ENCODE measurements at regions of chr11 and their contacts with region 1.

Region 1: GRCh38 chr11:97963528-97964331 is 1057.0 kb upstream of the CNTN5 start:
- DNase-seq: no peak
- H3K4me3 ChIP-seq: no peak overlapping the region
- H3K27ac ChIP-seq: no peak overlapping the region
- H3K4me1 ChIP-seq: peaks cover 31% of the 10 kb centered on the region
- H3K27me3 ChIP-seq: no peaks in the 10 kb centered on the region
- CTCF ChIP-seq: no peak

Region 2: DNA sequence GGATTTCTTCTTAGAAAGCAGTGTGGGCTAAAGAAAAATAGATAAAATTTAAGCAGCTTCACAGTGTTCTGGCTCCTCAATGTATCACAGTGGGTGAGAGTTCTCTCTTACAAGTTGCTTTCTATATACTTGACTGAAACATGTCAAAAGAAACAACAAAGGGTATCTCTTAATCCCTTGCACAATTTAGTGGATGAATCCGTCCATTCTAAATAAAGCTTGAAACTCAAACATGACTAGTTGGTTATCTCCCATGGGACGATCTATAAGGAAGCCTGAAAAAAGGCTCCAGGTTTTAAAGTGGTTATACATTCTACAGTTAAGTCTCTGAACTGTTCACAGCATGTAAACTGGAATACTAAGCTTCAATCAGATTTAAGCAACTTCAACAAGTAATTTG is 63.9 kb after region 1 on chr11:
- CTCF ChIA-PET with region 1: no interaction called
- dilution Hi-C with region 1: loop called (anchors 5 kb)
- in situ Hi-C with region 1: no loop called
- intact Hi-C with region 1: no loop called
- DNase-seq: no peak
- H3K4me3 ChIP-seq: no peak overlapping the region
- H3K27ac ChIP-seq: no peak overlapping the region
- H3K4me1 ChIP-seq: no peaks in the 10 kb centered on the region
- H3K27me3 ChIP-seq: no peaks in the 10 kb centered on the region
- CTCF ChIP-seq: no peak

Region 3: GRCh38 chr11:98056945-98057344 is 93.2 kb after region 1 on chr11:
- CTCF ChIA-PET with region 1: no interaction called
- dilution Hi-C with region 1: no loop called
- in situ Hi-C with region 1: no loop called
- intact Hi-C with region 1: no loop called
- DNase-seq: no peak
- H3K4me3 ChIP-seq: no peak overlapping the region
- H3K27ac ChIP-seq: no peak overlapping the region
- H3K4me1 ChIP-seq: no peaks in the 10 kb centered on the region
- H3K27me3 ChIP-seq: no peaks in the 10 kb centered on the region
- CTCF ChIP-seq: no peak

Region 4: DNA sequence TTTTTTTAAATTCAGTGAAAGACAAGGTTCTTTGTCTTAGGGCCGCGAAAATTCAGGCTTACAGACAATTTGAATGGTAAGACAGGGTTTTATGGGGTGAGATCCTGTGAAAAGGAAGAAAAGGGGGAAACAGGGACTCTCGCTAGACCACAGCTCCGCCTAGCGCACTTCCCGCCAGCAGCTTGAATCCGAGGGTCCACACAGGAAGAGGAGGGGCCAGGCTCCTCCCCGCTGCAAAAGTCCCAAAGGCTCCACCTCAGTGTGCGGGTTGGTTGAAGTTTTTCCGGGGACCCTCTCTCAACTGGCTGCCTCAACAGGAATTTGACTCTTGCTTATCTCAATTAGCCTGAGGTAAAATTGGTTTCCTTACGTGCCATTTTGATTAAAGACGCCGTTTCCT is 106.1 kb after region 1 on chr11:
- CTCF ChIA-PET with region 1: no interaction called
- dilution Hi-C with region 1: no loop called
- in situ Hi-C with region 1: no loop called
- intact Hi-C with region 1: no loop called
- DNase-seq: no peak
- H3K4me3 ChIP-seq: no peak overlapping the region
- H3K27ac ChIP-seq: no peak overlapping the region
- H3K4me1 ChIP-seq: no peaks in the 10 kb centered on the region
- H3K27me3 ChIP-seq: no peaks in the 10 kb centered on the region
- CTCF ChIP-seq: no peak

Region 5: DNA sequence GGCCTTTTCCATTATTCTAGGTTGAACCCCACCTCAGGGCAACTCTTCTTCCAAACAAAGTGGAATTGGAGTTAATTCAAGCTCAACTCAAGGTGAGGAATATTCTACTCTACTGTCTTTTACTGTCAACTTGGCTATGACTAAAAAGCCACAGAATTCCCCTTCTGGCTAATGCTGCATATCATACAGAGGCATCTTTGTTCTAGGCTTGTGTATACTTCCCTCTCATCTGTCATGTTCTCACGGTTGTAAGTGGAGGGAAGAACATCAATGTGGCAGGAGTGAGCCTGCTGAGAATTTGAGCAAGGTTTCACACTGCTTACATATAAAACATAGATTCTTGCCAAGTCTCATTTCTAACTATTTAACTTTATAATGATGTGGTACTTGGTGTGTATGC is 135.6 kb after region 1 on chr11:
- CTCF ChIA-PET with region 1: no interaction called
- dilution Hi-C with region 1: no loop called
- in situ Hi-C with region 1: no loop called
- intact Hi-C with region 1: no loop called
- DNase-seq: peak; percentile 16
- H3K4me3 ChIP-seq: no peak overlapping the region
- H3K27ac ChIP-seq: no peak overlapping the region
- H3K4me1 ChIP-seq: no peaks in the 10 kb centered on the region
- H3K27me3 ChIP-seq: no peaks in the 10 kb centered on the region
- CTCF ChIP-seq: no peak

Region 6: GRCh38 chr11:98180921-98181320 is 217.2 kb after region 1 on chr11:
- CTCF ChIA-PET with region 1: no interaction called
- dilution Hi-C with region 1: no loop called
- in situ Hi-C with region 1: no loop called
- intact Hi-C with region 1: no loop called
- DNase-seq: no peak
- H3K4me3 ChIP-seq: no peak overlapping the region
- H3K27ac ChIP-seq: no peak overlapping the region
- H3K4me1 ChIP-seq: no peaks in the 10 kb centered on the region
- H3K27me3 ChIP-seq: no peaks in the 10 kb centered on the region
- CTCF ChIP-seq: no peak

Measured in mammary epithelial cell (primary cell).